Dorsolateral prefrontal cortex (tissue), 120 donors: ENCODE measurements at regions of chr9 and their contacts with region 1.

Region 1: GRCh38 chr9:87479801-87480201 is 17.9 kb upstream of the DAPK1 start:
- DNase-seq: peak in 1 of 10 donors; percentile 24
- H3K4me3 ChIP-seq: no peak overlapping the region
- H3K27ac ChIP-seq: no peak overlapping the region
- H3K27me3 ChIP-seq: no peaks in the 10 kb centered on the region
- CTCF ChIP-seq: no peak

Region 2: DNA sequence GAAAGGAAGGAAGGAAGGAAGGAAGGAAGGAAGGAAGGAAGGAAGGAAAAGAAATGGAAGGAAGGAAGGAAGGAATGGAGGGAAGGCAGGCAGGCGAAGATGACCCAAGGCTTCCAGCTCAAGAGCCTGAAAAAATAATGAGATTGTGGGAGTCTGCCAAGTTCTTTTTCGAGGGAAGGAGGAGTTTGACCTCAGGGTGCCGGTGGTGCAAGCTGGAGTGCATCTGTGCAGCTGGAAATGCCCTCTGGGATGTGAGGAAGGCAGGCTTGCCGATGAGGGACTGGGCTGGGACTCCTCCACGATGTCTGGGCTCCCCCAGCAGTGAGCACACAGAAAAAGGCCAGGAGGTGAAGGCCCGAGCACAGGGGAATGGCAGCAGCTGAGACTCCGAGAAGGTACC is 137.1 kb before region 1 on chr9:
- intact Hi-C with region 1: loop called in 1 of 2 experiments (anchors 10 kb)
- DNase-seq: no peak
- H3K4me3 ChIP-seq: no peak overlapping the region
- H3K27ac ChIP-seq: peak overlapping the region in 13 of 59 donors; percentile 5 to 69 (median 28)
- H3K27me3 ChIP-seq: no peaks in the 10 kb centered on the region
- CTCF ChIP-seq: no peak

Region 3: GRCh38 chr9:87701931-87702421 is 222.2 kb after region 1 on chr9:
- intact Hi-C with region 1: no loop called
- DNase-seq: no peak
- H3K4me3 ChIP-seq: no peak overlapping the region
- H3K27ac ChIP-seq: no peak overlapping the region
- H3K27me3 ChIP-seq: no peaks in the 10 kb centered on the region
- CTCF ChIP-seq: no peak

Region 4: DNA sequence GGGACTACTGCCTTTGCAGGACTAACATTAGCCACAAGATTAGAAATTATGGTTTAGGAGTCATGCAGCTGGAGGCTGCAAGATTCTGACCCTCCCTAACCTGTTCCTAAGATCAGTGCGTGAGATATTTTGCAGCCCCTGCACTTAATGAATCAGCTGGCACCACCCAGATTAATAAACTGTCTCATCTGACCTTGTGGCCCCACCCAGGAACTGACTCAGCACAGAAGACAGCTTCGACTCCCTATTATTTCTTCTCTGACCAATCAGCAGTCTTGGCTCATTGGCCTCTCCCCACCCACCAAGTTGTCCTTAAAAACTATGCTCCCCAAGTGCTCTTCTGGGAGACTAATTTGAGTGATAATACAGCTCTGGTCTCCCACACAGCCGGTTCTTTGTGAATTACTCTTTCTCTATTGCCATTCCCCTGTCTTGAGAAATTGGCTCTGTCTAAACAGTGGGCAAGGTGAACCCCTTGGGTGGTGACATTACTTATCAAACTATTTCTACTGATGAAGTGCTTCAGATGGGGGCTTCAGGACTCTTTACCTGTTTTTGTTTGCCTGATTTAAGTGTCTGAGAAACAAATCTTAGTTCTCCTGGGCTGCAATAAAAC is 263.1 kb after region 1 on chr9:
- intact Hi-C with region 1: no loop called
- DNase-seq: no peak
- H3K4me3 ChIP-seq: no peak overlapping the region
- H3K27ac ChIP-seq: no peak overlapping the region
- H3K27me3 ChIP-seq: no peaks in the 10 kb centered on the region
- CTCF ChIP-seq: no peak

Region 5: GRCh38 chr9:87862536-87863268 is 382.9 kb after region 1 on chr9:
- intact Hi-C with region 1: no loop called
- DNase-seq: no peak
- H3K4me3 ChIP-seq: no peak overlapping the region
- H3K27ac ChIP-seq: no peak overlapping the region
- H3K27me3 ChIP-seq: no peaks in the 10 kb centered on the region
- CTCF ChIP-seq: no peak